SK-N-SH (cell line): ENCODE measurements at regions of chr17 and their contacts with region 1.

Region 1: GRCh38 chr17:77287432-77288071 is 146.8 kb downstream of the SEC14L1 start:
- DNase-seq: peak; percentile 80
- H3K4me3 ChIP-seq: peak overlapping the region; percentile 35; a peak in 3 of 4 replicates
- H3K27ac ChIP-seq: peak overlapping the region; percentile 95 to 98
- H3K4me1 ChIP-seq: peaks cover 46 to 64% of the 10 kb centered on the region in 2 experiments
- H3K27me3 ChIP-seq: no peaks in the 10 kb centered on the region
- CTCF ChIP-seq: no peak
- EP300 ChIP-seq: peak in 1 of 2 experiments; percentile 80; a peak in 2 of 4 replicates
- RAD21 ChIP-seq: peak; percentile 10; the same call in 1 of the 2 replicates

Region 2: GRCh38 chr17:77227461-77228237 is 59.9 kb before region 1 on chr17:
- CTCF ChIA-PET with region 1: no interaction called
- POLR2A ChIA-PET with region 1: no interaction called
- DNase-seq: no peak
- H3K4me3 ChIP-seq: no peak overlapping the region
- H3K27ac ChIP-seq: no peak overlapping the region
- H3K4me1 ChIP-seq: no peaks in the 10 kb centered on the region; a peak in 1 of 4 replicates
- H3K27me3 ChIP-seq: no peaks in the 10 kb centered on the region
- CTCF ChIP-seq: no peak
- EP300 ChIP-seq: no peak
- RAD21 ChIP-seq: no peak

Region 3: GRCh38 chr17:77312786-77313599 is 25.4 kb after region 1 on chr17:
- CTCF ChIA-PET with region 1: interaction called, 3 read pairs
- POLR2A ChIA-PET with region 1: interaction called, 10 read pairs
- DNase-seq: peak; percentile 29
- H3K4me3 ChIP-seq: no peak overlapping the region
- H3K27ac ChIP-seq: peak overlapping the region in 1 of 2 experiments; percentile 3; a peak in 1 of 4 replicates
- H3K4me1 ChIP-seq: peaks cover 42 to 67% of the 10 kb centered on the region in 2 experiments
- H3K27me3 ChIP-seq: no peaks in the 10 kb centered on the region
- CTCF ChIP-seq: no peak
- EP300 ChIP-seq: no peak
- RAD21 ChIP-seq: no peak